Sciatic nerve (tissue), 2 donors: ENCODE measurements at regions of chr15 and their contacts with region 1.

Region 1: DNA sequence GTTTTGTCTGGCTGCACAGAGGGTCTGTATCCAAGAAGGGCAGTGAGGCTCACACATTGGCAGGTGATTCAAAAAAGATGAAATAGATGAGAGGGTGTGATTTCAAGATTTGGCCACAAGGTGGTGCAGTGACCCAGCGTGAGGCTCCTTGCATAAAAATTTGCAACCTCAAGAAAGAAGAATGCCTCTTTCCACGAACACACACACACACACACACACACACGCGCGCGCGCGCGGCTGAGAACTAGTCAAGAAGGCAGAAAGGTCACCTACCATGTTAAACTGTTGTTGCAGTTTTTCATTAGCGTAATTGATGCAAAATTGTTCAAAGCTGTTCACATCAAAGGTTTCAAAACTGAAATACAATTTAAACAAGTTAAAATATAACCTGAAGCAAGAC is 39.2 kb downstream of the MYO5C start:
- DNase-seq: peak; percentile 80
- ATAC-seq: peak; percentile 75

Region 2: DNA sequence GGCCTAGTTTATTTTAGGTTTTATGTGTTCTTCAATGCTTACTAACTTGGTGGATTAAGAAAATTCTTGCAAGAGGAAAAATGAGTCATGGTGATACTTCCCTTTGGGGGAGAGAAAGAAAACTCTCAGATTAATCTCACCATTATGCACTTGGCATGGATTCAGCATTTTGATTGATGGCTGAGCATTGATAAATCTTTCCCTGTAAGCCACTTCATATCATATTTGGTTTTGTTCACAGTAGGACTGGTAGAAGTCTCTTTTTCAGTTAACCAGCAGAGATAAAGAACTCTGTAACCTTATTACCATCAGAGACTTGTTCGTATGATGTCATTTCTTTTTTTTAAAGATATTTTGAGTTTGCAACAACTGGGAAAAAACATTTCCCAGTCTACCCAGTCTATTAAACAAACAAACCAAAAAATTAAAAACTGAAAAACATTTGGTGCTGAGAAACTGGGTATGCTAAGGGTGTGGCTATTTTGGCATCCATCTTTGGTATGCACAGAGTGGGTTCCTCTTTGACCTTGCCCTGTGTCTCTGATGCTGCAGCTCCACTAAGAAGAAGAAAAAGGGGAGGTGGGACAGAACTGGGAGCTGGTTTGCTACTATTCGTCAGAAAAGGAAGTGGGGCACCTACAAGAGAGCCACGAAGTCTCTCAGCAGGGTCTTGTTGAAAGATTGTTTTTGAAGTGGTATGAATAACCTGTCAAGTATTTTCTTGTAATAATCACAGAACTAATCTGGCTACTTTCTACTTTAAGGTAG is 409.7 kb before region 1 on chr15:
- intact Hi-C with region 1: no loop called
- DNase-seq: no peak
- ATAC-seq: peak; percentile 65

Region 3: DNA sequence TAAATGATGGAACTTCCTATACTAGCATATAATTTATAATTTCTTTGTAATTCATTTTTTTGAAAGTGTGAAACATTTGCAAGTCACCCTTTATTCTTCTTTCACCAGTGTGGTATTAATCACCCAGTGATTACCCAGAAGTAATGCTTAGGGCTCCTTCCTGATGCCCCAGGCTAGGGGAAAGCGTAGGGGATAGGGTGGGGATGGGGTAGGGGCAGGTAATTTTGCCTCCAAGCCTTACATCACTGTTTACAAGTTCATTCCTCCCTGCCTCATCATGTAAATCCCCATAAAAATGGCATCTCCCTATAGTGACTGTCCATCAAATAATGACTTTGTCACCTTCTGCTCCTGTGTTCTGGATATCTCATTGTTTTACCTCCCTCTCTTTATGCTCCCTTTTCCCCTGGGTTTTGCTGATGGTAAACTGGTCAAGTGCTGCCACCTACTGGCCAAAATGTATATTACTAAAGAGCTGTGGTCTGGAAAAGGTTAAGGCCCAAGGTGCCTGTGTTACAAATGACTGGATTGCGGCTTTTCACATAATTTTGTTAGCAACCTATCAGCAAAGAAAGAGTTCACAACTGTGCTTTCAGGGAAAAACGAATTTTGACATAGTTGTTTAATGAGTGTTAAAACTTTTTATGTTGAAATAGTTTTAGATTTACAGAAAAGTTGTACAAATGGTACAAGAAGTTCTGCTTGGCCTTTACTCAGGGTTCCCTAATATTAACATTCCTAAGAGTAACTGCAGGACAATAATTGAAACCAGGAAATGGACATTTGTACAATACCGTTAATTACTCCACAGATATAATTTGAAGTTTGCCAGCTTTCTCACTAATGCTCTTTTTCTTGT is 479.1 kb after region 1 on chr15:
- intact Hi-C with region 1: loop called (anchors 5 kb)
- DNase-seq: no peak
- ATAC-seq: peak; percentile 78